Psoas muscle (tissue), 8 donors: ENCODE measurements at regions of chr3 and their contacts with region 1.

Region 1: DNA sequence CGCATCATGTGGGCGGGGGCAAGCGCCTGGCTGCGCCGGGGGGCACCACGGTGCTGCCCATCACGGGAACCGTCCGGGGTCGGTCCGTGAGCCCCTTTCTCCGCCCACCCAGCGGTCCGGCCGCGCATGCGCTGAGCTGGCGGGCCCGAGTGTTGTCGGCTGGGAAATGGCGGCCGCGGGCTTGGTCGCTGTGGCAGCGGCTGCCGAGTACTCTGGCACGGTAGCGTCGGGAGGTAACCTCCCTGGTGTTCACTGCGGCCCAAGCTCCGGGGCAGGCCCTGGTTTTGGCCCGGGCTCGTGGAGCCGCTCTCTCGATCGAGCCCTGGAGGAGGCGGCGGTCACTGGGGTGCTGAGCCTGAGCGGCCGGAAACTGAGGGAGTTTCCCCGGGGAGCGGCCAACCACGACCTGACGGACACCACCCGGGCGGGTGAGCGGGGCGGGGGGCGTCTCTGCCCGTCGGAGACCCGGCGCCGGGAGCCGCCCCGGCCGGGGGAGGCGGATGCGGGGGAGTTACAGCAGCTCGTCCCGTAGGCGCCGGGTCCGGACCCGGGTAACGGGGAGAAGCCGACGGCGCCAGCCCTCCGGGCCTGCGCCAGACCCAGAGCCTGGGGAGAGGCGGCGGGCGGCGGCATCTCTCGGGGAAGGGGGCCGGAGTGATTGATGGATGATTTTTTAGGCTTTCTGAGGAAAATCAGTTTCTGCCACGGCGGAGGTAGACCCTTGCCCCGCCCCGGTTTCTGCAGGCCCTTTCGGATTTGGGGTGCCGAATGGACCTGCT is at the start of gene LRCH3:
- DNase-seq: peak; percentile 85 to 90
- ATAC-seq: peak; percentile 81 to 89 (median 86)
- H3K4me3 ChIP-seq: peak within 1 kb of the TSS; percentile 81
- H3K27ac ChIP-seq: peak within 1 kb of the TSS; percentile 94
- H3K4me1 ChIP-seq: peaks cover 30% of the 10 kb centered on the region
- H3K27me3 ChIP-seq: no peaks in the 10 kb centered on the region
- CTCF ChIP-seq: no peak
- total RNA-seq, gene LRCH3: 16.9 to 29.5 (median 25.0) TPM

Region 2: GRCh38 chr3:197711973-197712707 is 79.2 kb before region 1 on chr3:
- intact Hi-C with region 1: loop called in 1 of 2 experiments (anchors 5 kb)
- DNase-seq: peak; percentile 88 to 93
- ATAC-seq: peak; percentile 87 to 94 (median 89)
- H3K4me3 ChIP-seq: peak overlapping the region; percentile 53
- H3K27ac ChIP-seq: peak overlapping the region; percentile 93
- H3K4me1 ChIP-seq: peaks cover 28% of the 10 kb centered on the region
- H3K27me3 ChIP-seq: no peaks in the 10 kb centered on the region
- CTCF ChIP-seq: no peak

Region 3: GRCh38 chr3:197749601-197750395 is 41.5 kb before region 1 on chr3 and contains the start of gene FYTTD1:
- intact Hi-C with region 1: loop called in 1 of 2 experiments (anchors 5 kb)
- DNase-seq: peak; percentile 94 to 97
- ATAC-seq: peak; percentile 83 to 87 (median 86)
- H3K4me3 ChIP-seq: peak within 1 kb of the TSS; percentile 92
- H3K27ac ChIP-seq: peak within 1 kb of the TSS; percentile 99
- H3K4me1 ChIP-seq: peaks cover 54% of the 10 kb centered on the region
- H3K27me3 ChIP-seq: no peaks in the 10 kb centered on the region
- CTCF ChIP-seq: peak; percentile 55
- total RNA-seq, gene FYTTD1: 143 to 232 (median 157) TPM

Region 4: DNA sequence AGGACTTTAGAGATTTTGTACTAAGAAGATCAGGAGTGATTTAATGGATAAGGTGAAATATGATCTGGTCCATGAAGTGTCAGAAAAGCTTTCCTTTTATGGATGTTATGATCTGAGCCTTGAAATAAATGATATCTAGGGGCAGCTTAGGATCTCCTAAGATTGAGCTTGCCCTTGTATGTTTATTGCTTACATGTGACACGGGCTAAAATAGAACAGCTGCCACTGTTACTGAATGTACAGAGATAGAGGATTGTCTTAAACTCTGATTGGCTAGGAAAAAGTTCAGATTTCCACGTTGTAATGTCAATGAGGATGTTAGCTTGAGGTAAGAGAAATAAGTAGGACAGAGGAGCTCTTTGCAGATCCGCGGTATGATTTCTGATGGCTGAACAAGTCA is 32.8 kb before region 1 on chr3:
- intact Hi-C with region 1: loop called (anchors 2 to 5 kb)
- DNase-seq: no peak
- ATAC-seq: peak in 2 of 4 donors; percentile 44 to 70
- H3K4me3 ChIP-seq: no peak overlapping the region
- H3K27ac ChIP-seq: peak overlapping the region; percentile 34
- H3K4me1 ChIP-seq: peaks cover 28% of the 10 kb centered on the region
- H3K27me3 ChIP-seq: no peaks in the 10 kb centered on the region
- CTCF ChIP-seq: no peak

Region 5: DNA sequence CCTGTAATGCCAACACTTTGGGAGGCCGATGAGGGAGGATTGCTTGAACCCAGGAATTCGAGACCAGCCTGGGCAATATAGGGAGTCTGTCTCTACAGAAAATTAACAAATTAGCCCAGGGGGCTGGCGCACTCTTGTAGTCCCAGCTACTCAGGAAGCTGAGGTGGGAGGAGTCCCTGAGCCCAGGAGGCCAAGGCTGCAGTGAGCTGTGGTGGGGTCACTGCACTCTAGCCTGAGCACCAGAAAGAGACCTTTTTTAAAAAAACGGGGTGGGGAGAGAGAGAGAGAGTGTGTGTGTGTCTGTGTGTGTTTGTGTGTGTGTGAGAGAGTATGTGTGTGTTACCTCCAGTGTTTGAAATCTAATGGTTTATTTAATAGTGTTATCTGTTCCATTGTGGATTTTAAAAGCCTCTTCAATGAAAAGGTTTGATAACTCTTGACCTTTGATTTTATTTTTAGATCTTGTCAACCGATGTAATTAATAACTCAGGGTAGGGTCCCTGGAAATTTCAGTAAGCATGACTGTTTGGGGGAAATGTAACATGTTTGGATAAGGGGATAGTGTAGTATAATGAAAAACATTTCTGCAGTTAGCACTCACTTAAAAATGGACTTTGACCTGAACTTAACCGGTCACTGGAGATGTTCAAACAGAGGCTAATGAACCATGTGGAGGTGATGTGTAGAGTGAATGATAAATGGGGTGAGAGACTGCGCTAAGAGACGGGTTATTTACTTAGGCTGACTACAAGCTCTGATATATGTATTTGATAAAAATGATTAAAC is 29.4 kb after region 1 on chr3:
- intact Hi-C with region 1: no loop called
- DNase-seq: no peak
- ATAC-seq: no peak
- H3K4me3 ChIP-seq: no peak overlapping the region
- H3K27ac ChIP-seq: no peak overlapping the region
- H3K4me1 ChIP-seq: no peaks in the 10 kb centered on the region
- H3K27me3 ChIP-seq: no peaks in the 10 kb centered on the region
- CTCF ChIP-seq: no peak

Region 6: GRCh38 chr3:197959898-197960693 is 168.8 kb after region 1 on chr3 and contains the start of gene LMLN:
- intact Hi-C with region 1: no loop called
- DNase-seq: peak; percentile 96 to 98
- ATAC-seq: peak; percentile 99
- H3K4me3 ChIP-seq: peak within 1 kb of the TSS; percentile 84
- H3K27ac ChIP-seq: peak within 1 kb of the TSS; percentile 81
- H3K4me1 ChIP-seq: peaks cover 16% of the 10 kb centered on the region
- H3K27me3 ChIP-seq: no peaks in the 10 kb centered on the region
- CTCF ChIP-seq: no peak
- total RNA-seq, gene LMLN: 2.9 to 7.5 (median 5.0) TPM